ENCODE measurements at regions of chr6 and their contacts with region 1.

Region 1: DNA sequence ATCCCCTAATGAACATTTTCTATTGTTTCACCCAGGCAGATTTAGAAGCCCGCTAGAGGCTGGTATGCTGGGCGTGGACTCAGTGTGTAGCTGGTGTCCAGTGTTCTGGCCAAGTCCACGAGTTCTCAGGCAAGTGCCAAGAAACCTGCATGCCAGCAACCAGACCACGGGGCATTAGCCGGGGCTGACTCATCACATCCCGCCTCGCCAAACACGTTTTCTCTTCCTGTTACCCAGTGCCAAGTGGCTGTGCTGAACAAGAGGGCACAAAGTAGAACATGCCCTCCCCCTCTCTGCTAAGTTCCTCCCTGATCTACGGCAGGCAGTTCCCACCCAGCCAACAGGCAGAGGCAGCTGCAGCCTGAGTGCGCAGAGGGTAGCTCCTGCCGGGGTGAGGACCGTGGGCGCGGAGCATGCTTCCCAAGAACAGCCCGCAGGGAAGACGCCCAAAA is 29.6 kb downstream of the RAMACL start:
- DNase-seq: peak; percentile 79 to 95 (median 90)
- H3K4me3 ChIP-seq: peak overlapping the region in 44 of 59 donors; percentile 4 to 54 (median 26)
- H3K27ac ChIP-seq: peak overlapping the region; percentile 9 to 91 (median 78)
- H3K27me3 ChIP-seq: no peaks in the 10 kb centered on the region
- CTCF ChIP-seq: peak in 22 of 56 donors; percentile 4 to 61 (median 23)

Region 2: DNA sequence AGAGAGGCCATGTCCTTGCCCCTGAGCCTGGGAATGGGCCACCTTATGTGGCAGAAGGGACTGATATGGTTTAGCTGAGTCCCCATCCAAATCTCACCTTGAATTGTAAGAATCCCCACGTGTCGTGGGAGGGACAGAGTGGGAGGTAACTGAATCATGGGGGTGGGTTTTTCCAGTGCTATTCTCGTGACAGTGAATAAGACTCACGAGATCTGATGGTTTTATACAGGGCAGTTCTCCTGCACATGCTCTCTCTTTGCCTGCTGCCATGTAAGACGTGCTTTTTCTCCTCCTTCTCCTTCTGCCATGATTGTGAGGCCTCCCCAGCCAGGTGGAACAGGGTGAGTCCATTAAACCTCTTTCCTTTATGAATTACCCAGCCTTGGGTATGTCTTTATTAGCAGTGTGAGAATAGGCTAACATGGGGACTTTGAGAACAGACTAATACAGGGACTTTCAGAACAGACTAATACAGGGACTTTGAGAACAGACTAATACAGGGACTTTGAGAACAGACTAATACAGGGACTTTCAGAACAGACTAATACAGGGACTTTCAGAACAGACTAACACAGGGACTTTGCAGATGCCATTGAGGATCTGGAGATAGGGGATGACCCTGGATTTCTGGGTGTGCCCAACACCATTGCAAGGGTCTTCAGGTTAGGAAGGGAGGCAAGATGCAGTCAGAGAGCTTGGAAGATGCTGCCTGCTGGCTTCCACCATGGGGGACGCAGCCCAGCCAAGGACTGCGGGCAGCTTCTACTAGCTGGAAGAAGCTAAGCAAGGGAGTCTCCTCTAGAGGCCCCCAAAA is 57.3 kb before region 1 on chr6:
- intact Hi-C with region 1: loop called in 1 of 2 experiments (anchors 5 kb)
- DNase-seq: peak in 1 of 10 donors; percentile 23
- H3K4me3 ChIP-seq: no peak overlapping the region
- H3K27ac ChIP-seq: peak overlapping the region in 48 of 59 donors; percentile 3 to 89 (median 69)
- H3K27me3 ChIP-seq: no peaks in the 10 kb centered on the region
- CTCF ChIP-seq: no peak

Region 3: DNA sequence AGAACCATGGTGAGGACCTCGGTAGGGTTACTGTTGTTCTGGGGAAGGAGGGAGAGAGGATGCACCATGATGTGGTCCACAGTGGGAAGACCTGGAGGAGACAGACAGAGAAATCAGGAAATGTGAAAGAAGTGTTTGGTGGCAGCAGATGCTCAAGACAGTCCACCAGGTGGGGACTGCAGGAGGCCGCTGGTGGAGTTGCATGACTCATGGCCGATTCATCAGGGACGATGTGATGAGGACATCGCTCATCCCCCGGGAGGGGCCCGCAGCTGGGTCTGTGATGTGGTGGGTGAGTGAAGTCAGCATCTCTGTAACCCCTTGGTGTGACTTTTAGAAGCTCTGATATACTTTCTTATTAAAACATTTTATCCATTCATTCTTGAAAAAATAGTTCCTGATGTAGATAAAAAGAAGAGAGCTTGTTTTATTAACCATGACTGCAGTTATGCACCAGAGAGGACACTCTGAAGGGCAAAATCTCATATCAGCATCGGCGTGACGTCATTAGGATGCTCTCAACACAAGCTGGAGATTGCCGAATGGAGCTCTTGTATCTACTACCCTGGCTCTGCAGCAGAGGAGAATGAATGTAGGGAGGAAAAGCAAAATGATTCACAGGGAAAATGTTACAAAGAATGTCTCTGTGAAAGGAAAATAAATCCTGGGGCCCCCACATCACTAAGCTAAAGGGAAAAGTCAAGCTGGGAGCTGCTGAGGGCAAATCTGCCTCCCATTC is 41.7 kb before region 1 on chr6:
- intact Hi-C with region 1: loop called in 1 of 2 experiments (anchors 5 kb)
- DNase-seq: peak in 7 of 10 donors; percentile 22 to 92 (median 76)
- H3K4me3 ChIP-seq: peak overlapping the region in 1 of 59 donors; percentile 7
- H3K27ac ChIP-seq: peak overlapping the region in 37 of 59 donors; percentile 2 to 69 (median 37)
- H3K27me3 ChIP-seq: no peaks in the 10 kb centered on the region
- CTCF ChIP-seq: peak in 36 of 56 donors; percentile 8 to 59 (median 32)

Region 4: DNA sequence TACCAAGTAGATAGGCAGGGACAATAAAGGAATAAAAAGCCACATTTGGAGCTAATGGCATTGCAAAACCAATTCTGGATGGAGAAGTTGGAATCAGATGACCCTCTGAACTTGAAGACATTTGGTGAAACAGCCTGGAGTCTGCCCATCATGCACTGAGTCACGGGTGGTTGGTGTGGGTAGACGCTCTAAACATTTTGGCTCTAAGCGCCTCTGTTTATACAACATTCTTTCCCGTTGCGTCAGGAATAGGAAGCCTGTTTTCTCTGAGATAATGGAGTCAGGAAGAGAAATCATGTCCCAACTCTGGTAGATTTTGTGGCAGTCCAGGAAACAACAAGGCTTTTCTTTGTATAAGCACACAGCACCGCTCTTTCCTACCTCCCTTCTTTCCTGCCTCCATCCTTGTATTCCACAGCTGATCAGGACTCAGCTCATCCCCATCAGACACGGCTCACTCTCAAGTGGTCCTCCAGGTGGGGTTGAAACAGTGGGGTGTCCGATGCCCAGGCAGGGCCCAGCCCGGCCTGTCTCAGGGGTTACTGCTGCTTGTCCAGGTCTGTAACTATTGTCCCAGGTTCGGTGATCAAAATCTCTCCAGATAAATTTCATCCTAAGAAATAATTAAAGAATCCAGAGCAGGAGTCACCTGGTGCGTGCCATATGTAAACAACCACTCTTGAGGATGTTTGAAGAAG is 41.7 kb after region 1 on chr6:
- intact Hi-C with region 1: loop called in 1 of 2 experiments (anchors 5 kb)
- DNase-seq: no peak
- H3K4me3 ChIP-seq: peak overlapping the region in 16 of 59 donors; percentile 1 to 43 (median 10)
- H3K27ac ChIP-seq: peak overlapping the region; percentile 29 to 91 (median 81)
- H3K27me3 ChIP-seq: no peaks in the 10 kb centered on the region
- CTCF ChIP-seq: no peak

Region 5: DNA sequence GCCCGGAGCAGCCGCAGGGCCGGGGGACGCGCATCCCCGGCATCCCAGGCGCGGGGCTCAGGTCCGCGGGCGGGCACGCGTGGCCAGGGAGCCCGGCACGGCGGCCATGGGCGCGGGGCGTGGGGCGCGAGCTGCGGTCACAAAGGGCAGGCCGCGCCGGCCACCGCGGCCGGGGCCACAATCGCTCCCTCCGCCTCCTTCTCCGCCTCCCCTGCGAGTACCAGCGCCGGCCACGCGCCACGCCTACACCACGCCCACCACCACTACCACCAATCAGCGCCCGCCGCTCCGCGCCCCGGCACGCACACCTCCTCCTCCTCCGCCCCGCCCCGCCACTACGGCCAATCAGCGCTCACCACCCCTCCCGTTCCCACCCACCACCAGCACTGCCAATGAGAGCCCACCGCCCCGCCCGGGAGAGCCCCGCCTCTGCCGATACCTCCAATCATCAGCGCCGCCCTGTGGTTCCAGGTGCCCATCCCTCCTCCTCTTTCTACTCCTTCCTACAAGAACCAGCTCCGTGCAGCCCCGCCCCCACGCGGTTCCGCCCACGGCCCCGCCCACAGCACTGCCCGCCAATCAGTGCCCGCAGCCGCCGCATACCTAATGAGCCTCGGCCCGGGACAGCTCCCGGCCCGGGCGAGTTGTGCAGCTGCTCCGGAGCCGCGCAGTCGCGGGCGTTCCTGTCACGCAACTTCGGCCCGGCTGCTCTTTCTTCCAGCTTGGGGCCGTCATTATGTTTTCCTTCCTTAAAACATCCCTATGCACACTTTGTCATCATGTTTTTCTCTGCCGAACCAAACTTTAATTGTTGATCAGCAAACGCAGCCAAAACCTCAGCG is 70.4 kb after region 1 on chr6 and contains the start of gene RPS6KA2:
- intact Hi-C with region 1: loop called (anchors 2 to 5 kb)
- DNase-seq: peak; percentile 100
- H3K4me3 ChIP-seq: peak within 1 kb of the TSS; percentile 70 to 98 (median 88)
- H3K27ac ChIP-seq: peak within 1 kb of the TSS; percentile 70 to 99 (median 93)
- H3K27me3 ChIP-seq: no peaks in the 10 kb centered on the region
- CTCF ChIP-seq: peak in 44 of 56 donors; percentile 4 to 65 (median 34)
- total RNA-seq, gene RPS6KA2: 66.5 to 123 (median 91.5) TPM

Region 6: DNA sequence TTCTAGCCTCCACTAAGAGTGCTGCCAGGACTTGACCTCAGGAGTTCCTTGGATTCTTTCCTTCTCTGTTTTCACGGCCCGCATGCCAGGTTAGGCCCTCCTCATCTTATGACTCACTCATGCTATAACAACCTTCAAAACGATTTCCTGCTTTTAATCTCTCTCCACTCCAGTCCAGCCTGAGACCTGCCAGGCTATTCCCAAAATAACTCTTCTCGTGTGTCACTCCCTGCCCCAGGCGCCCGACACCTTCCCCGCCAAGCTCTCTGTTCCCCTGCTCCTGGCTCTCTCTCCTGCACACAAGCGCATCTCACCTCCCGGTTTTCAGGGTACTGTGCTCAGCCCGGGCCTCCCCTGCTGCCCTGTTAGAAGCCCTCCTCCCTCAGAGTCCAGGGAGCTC is 134.3 kb after region 1 on chr6:
- intact Hi-C with region 1: no loop called
- DNase-seq: peak in 1 of 10 donors; percentile 48
- H3K4me3 ChIP-seq: no peak overlapping the region
- H3K27ac ChIP-seq: no peak overlapping the region
- H3K27me3 ChIP-seq: no peaks in the 10 kb centered on the region
- CTCF ChIP-seq: no peak

Measured in dorsolateral prefrontal cortex (tissue), 120 donors.